K562 (cell line): ENCODE measurements at regions of chr7 and their contacts with region 1.

Region 1: GRCh38 chr7:119925581-119926289 is 347.2 kb upstream of the KCND2 start:
- DNase-seq: peak; percentile 67 to 89 (median 76)
- ATAC-seq: peak; percentile 90
- H3K4me3 ChIP-seq: no peak overlapping the region
- H3K27ac ChIP-seq: peak overlapping the region; percentile 24
- H3K4me1 ChIP-seq: peaks cover 0 to 7% of the 10 kb centered on the region in 2 experiments; a peak in 1 of 5 replicates
- H3K27me3 ChIP-seq: no peaks in the 10 kb centered on the region
- CTCF ChIP-seq: no peak
- EP300 ChIP-seq: peak; percentile 96
- POLR2A ChIP-seq: no peak
- RAD21 ChIP-seq: peak in 1 of 2 experiments; percentile 26; a peak in 1 of 4 replicates

Region 2: DNA sequence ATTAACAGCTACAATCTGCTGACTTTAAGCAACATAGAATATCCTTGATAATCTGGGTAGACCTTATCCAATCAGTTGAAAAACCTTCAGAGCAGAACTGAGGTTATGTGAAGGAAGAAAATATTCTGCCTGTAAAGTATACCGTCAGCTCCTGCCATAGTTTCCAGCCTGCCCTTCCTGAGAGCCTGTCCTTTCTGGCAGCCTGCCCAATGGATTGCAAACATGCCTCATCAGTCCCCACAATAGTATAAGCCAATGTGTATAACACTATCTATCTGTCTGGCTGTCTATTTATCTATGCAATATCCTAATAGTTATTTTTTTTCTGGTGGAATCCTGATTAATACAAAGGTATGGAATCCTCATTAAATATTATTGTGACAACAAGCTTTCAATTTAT is 141.9 kb before region 1 on chr7:
- CTCF ChIA-PET with region 1: no interaction called
- POLR2A ChIA-PET with region 1: no interaction called
- in situ Hi-C with region 1: no loop called
- intact Hi-C with region 1: loop called (anchors 5 kb)
- DNase-seq: peak in 1 of 4 experiments; percentile 18
- ATAC-seq: peak; percentile 38; the same call in 2 of the 3 replicates
- H3K4me3 ChIP-seq: no peak overlapping the region
- H3K27ac ChIP-seq: no peak overlapping the region
- H3K4me1 ChIP-seq: no peaks in the 10 kb centered on the region
- H3K27me3 ChIP-seq: no peaks in the 10 kb centered on the region
- CTCF ChIP-seq: no peak
- EP300 ChIP-seq: no peak
- POLR2A ChIP-seq: no peak
- RAD21 ChIP-seq: no peak

Region 3: DNA sequence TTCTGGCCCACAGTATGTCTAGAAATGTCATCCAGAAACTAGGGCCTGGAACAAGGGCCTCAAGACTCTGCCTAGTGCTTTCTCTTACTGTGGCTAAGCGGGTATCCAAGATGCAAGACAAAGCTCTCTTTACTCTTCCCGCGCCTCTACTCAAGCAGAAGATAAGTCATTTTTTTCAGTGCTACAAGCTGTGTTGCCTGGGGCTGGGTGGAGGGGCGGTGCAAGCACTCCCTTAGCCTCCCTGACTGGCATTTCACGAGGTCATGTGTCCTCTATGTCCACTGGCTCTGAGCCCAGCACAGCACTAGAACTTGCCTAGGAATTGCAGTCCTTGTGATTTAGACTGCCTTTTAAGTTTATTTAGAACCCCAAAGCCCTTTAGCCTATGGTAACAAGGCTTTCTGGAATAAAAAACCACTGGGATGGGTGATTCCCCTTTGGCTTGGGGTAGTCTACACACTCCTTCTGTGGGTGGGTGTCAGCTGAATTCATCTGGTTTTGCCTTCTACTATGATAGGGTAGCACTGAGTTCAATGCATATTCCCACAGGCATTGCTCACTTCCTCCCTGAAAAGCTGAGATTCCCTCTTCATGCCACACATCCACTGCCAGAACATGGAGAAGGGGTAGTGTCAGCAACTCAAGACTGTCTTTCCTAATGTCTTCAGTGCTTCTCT is 24.6 kb before region 1 on chr7:
- CTCF ChIA-PET with region 1: no interaction called
- POLR2A ChIA-PET with region 1: interaction called, 11 read pairs
- in situ Hi-C with region 1: no loop called
- intact Hi-C with region 1: loop called (anchors 2 kb)
- DNase-seq: peak in 1 of 4 experiments; percentile 52
- ATAC-seq: peak; percentile 57
- H3K4me3 ChIP-seq: no peak overlapping the region
- H3K27ac ChIP-seq: no peak overlapping the region
- H3K4me1 ChIP-seq: no peaks in the 10 kb centered on the region; a peak in 1 of 5 replicates
- H3K27me3 ChIP-seq: no peaks in the 10 kb centered on the region
- CTCF ChIP-seq: no peak
- EP300 ChIP-seq: no peak
- POLR2A ChIP-seq: no peak
- RAD21 ChIP-seq: no peak

Region 4: DNA sequence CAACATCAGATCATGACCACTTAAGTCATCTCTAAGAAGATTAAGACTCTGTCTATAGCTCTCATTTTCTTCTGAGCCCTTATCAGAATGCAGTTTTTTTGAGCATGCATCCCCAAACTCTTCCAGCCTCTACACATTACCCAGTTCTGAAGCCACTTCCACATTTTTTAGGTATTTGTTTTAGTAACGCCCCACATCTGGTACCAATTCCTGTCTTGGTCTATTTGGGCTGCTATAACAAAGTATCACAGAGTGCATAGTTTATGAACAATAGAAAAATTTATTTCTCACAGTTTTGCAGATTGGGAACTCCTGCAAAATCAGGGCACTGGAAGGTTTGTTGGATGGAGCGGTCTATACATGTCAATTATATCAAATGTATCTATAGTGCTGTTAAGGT is 239.5 kb after region 1 on chr7:
- CTCF ChIA-PET with region 1: no interaction called
- POLR2A ChIA-PET with region 1: no interaction called
- in situ Hi-C with region 1: no loop called
- intact Hi-C with region 1: no loop called
- DNase-seq: no peak
- ATAC-seq: no peak
- H3K4me3 ChIP-seq: no peak overlapping the region
- H3K27ac ChIP-seq: no peak overlapping the region
- H3K4me1 ChIP-seq: no peaks in the 10 kb centered on the region
- H3K27me3 ChIP-seq: no peaks in the 10 kb centered on the region
- CTCF ChIP-seq: no peak
- EP300 ChIP-seq: no peak
- POLR2A ChIP-seq: no peak
- RAD21 ChIP-seq: no peak

Region 5: DNA sequence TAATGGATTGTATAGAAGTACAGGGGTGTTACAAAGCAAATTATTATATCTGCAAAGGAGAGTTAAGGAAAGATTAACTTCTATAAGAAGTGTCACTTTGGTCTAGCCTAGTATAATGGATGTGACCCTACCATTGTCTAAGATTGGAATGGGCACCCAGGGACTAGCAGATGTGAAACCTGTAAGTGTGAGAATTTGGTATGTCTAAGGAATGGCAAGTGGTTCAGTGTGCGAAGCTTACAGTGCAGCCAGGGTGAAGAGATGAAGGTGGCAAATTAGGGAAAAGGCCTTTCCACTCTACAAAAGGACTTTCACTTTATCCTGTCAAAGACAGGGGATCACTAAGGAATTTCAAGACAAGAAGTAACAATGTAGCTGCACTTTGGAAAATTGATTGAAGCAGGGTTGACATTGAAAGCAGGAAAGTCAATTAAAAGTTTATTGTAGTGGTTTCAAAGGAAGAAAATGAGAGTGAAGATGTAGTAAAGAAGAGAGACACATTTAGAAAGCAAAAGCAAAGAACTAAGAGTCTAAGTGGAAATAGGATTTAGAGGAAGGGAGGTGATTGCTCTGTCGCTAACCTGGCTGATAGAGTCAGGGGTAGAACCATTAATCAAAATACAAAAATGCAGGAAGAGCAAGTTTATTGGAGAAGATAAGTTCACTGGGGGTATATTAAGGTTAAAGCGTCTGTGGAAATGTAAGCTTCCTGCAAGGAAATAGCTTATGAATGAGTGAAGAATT is 394.7 kb after region 1 on chr7:
- CTCF ChIA-PET with region 1: no interaction called
- POLR2A ChIA-PET with region 1: no interaction called
- in situ Hi-C with region 1: no loop called
- intact Hi-C with region 1: no loop called
- DNase-seq: no peak
- ATAC-seq: no peak
- H3K4me3 ChIP-seq: no peak overlapping the region
- H3K27ac ChIP-seq: no peak overlapping the region
- H3K4me1 ChIP-seq: no peaks in the 10 kb centered on the region
- H3K27me3 ChIP-seq: no peaks in the 10 kb centered on the region
- CTCF ChIP-seq: no peak
- EP300 ChIP-seq: no peak
- POLR2A ChIP-seq: no peak
- RAD21 ChIP-seq: no peak